ENCODE measurements at regions of chr7 and their contacts with region 1.

Region 1: GRCh38 chr7:85041605-85042216 is 145.1 kb downstream of the SEMA3D start:
- DNase-seq: peak; percentile 67
- ATAC-seq: peak; percentile 93
- H3K4me3 ChIP-seq: no peak overlapping the region; a peak in 1 of 4 replicates
- H3K27ac ChIP-seq: no peak overlapping the region
- H3K4me1 ChIP-seq: no peaks in the 10 kb centered on the region
- H3K27me3 ChIP-seq: no peaks in the 10 kb centered on the region
- CTCF ChIP-seq: peak; percentile 77

Region 2: GRCh38 chr7:84865560-84865959 is 176.2 kb before region 1 on chr7:
- CTCF ChIA-PET with region 1: no interaction called
- POLR2A ChIA-PET with region 1: no interaction called
- in situ Hi-C with region 1: no loop called
- intact Hi-C with region 1: no loop called
- DNase-seq: no peak
- ATAC-seq: no peak
- H3K4me3 ChIP-seq: no peak overlapping the region
- H3K27ac ChIP-seq: no peak overlapping the region
- H3K4me1 ChIP-seq: no peaks in the 10 kb centered on the region
- H3K27me3 ChIP-seq: no peaks in the 10 kb centered on the region
- CTCF ChIP-seq: no peak

Region 3: DNA sequence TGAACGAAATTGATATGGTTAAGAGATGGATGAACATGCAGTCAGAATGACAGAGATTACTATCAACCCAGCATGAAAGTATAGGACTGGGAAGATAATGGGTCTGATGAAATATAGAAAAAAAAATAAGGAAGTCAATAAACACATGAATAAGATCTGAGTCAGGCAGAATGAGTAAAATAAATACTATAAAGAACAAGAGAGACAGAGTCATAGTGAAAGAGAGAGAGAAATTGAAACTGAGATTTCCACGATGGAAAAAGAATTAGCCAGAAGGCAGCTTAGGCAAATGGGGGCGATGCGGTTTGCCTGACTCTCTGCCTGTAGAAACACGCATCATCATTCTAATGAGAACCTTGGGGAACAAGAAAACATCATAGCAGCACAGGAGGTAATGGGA is 118.5 kb after region 1 on chr7:
- CTCF ChIA-PET with region 1: no interaction called
- POLR2A ChIA-PET with region 1: no interaction called
- in situ Hi-C with region 1: no loop called
- intact Hi-C with region 1: no loop called
- DNase-seq: no peak
- ATAC-seq: no peak
- H3K4me3 ChIP-seq: peak overlapping the region in 1 of 2 experiments; percentile 11; a peak in 1 of 4 replicates
- H3K27ac ChIP-seq: no peak overlapping the region; the same call in 1 of the 2 replicates
- H3K4me1 ChIP-seq: no peaks in the 10 kb centered on the region
- H3K27me3 ChIP-seq: no peaks in the 10 kb centered on the region
- CTCF ChIP-seq: no peak

Region 4: GRCh38 chr7:85464042-85464651 is 422.4 kb after region 1 on chr7:
- CTCF ChIA-PET with region 1: interaction called, 4 read pairs
- POLR2A ChIA-PET with region 1: no interaction called
- in situ Hi-C with region 1: no loop called
- intact Hi-C with region 1: loop called (anchors 10 kb)
- DNase-seq: no peak
- ATAC-seq: no peak
- H3K4me3 ChIP-seq: no peak overlapping the region
- H3K27ac ChIP-seq: no peak overlapping the region
- H3K4me1 ChIP-seq: no peaks in the 10 kb centered on the region
- H3K27me3 ChIP-seq: no peaks in the 10 kb centered on the region
- CTCF ChIP-seq: peak; percentile 16; the same call in 1 of the 2 replicates

Region 5: DNA sequence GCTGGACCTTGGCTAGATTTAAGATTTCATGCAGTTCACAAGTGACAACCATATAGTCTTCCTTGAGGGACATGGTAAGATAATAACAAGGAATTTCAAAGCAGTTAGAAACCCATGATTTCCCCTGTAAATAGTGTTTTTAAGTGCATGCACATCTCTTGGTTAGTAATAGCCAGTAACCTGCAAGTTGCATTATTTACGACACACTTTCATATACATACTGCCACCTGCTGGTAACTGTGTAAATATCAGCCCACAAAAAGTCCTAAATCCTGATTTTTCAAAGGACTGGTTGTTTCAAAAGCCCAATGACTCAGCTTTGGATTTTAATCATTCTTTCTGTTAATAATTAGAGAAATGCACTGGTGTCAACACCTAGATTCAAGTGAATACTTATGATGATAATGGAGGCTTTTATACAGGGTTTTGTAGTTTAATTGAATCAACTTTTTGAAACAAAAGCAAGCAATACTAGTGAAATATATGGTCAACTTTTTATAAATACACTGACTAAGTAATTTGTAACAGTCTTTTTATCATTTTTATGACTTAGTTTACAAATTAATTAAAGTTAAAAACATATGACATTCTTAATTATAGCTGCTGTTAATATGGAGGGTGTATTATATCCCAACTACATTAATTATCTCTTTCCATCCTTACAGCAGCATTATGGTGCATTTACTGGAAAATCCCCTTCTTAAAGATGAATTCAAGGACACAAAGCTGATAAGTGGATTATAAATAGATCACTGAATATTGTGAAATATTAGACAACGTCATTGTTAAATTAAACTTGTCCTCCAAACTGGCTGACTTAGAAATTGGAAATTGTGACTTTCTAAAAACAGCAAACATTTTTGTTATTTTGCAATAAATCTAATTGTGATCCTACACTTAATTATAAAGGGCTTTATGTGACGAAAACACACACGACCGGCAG is 512.8 kb after region 1 on chr7:
- CTCF ChIA-PET with region 1: no interaction called
- POLR2A ChIA-PET with region 1: no interaction called
- in situ Hi-C with region 1: no loop called
- intact Hi-C with region 1: loop called (anchors 2 kb)
- DNase-seq: peak; percentile 50
- ATAC-seq: peak; percentile 62; the same call in 1 of the 2 replicates
- H3K4me3 ChIP-seq: no peak overlapping the region
- H3K27ac ChIP-seq: no peak overlapping the region
- H3K4me1 ChIP-seq: no peaks in the 10 kb centered on the region
- H3K27me3 ChIP-seq: no peaks in the 10 kb centered on the region
- CTCF ChIP-seq: peak; percentile 69; the same call in 1 of the 2 replicates

Region 6: DNA sequence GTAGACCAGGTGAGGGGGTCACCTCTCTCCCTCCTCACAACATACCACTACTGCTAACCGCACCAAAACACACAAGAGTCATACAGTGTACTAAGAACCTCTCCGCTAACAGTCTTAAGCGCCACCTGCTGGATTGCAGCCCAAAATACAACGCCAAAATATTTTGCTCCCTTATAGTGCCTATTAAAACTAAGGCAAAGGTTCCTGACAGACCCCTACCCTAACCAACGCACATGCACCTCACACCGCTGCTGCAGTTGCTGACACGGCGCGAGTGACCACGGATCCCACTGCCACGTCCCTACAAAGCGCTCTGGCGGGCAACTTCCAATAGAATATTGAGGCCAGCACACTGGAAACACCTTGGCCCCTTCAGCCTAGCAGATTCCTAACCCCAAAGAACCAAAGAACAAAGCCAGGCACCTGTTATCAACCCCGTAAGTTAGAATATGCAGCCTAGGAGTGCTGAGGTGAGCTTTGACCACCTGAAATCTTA is 708.8 kb after region 1 on chr7:
- CTCF ChIA-PET with region 1: no interaction called
- POLR2A ChIA-PET with region 1: no interaction called
- in situ Hi-C with region 1: no loop called
- intact Hi-C with region 1: loop called (anchors 5 kb)
- DNase-seq: peak; percentile 39
- ATAC-seq: peak; percentile 87
- H3K4me3 ChIP-seq: no peak overlapping the region
- H3K27ac ChIP-seq: no peak overlapping the region
- H3K4me1 ChIP-seq: no peaks in the 10 kb centered on the region
- H3K27me3 ChIP-seq: no peaks in the 10 kb centered on the region
- CTCF ChIP-seq: peak; percentile 80

Region 7: GRCh38 chr7:85829817-85830432 is 788.2 kb after region 1 on chr7:
- CTCF ChIA-PET with region 1: interaction called, 10 read pairs
- POLR2A ChIA-PET with region 1: no interaction called
- in situ Hi-C with region 1: no loop called
- intact Hi-C with region 1: loop called (anchors 5 kb)
- DNase-seq: no peak
- ATAC-seq: 0 out of 2 replicates have a peak, but pooled peaks have one; percentile 70
- H3K4me3 ChIP-seq: no peak overlapping the region
- H3K27ac ChIP-seq: no peak overlapping the region
- H3K4me1 ChIP-seq: no peaks in the 10 kb centered on the region
- H3K27me3 ChIP-seq: no peaks in the 10 kb centered on the region
- CTCF ChIP-seq: peak; percentile 41; the same call in 1 of the 2 replicates